ENCODE measurements at regions of chr11 and their contacts with region 1.

Region 1: GRCh38 chr11:27898166-27898565 is 197.9 kb upstream of the BDNF start:
- DNase-seq: peak; percentile 71
- ATAC-seq: peak; percentile 91
- H3K4me3 ChIP-seq: no peak overlapping the region
- H3K27ac ChIP-seq: peak overlapping the region; percentile 43
- H3K4me1 ChIP-seq: peaks cover 27% of the 10 kb centered on the region
- H3K27me3 ChIP-seq: no peaks in the 10 kb centered on the region
- CTCF ChIP-seq: no peak

Region 2: DNA sequence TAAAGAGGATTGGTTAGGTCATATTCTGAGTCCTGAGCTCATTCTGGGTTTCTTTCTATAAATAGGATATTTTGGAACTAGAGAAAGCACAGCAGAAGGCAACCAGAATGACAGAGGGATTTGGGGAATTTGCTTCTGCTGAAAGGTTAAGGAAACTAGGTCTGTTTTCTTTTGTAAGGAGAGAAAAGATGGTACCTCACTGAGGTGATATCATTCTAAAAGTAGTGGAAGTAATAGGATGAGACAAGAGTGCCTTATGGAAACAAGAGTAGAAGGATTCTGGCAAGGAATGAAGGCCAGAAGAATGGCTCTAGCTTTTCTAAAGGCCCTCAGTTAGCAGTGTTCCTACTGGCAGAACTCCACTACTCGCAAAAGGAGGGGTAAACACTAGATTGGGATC is 171.2 kb before region 1 on chr11:
- CTCF ChIA-PET with region 1: no interaction called
- POLR2A ChIA-PET with region 1: no interaction called
- intact Hi-C with region 1: no loop called
- DNase-seq: no peak
- ATAC-seq: no peak
- H3K4me3 ChIP-seq: no peak overlapping the region
- H3K27ac ChIP-seq: no peak overlapping the region
- H3K4me1 ChIP-seq: no peaks in the 10 kb centered on the region
- H3K27me3 ChIP-seq: no peaks in the 10 kb centered on the region
- CTCF ChIP-seq: no peak

Region 3: DNA sequence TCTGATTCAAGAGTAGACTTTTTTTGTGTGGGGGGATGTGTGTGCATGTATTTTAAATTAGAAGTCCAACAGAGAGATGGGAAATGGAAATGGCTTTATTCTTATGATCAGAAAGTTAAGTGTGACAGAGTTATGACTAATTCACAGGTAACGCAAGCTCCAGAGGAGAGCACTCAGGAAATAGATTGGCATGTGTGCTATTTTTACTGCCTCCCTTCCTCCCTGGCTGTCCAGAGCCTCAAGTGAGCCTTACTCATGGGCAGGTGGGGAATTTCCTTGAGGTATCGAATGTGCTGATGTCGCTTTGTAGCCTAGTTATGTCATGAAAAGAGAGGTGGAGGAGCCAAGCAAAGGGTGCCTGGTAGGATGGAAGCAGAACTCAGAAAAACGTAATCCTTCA is 127.6 kb before region 1 on chr11:
- CTCF ChIA-PET with region 1: no interaction called
- POLR2A ChIA-PET with region 1: no interaction called
- intact Hi-C with region 1: loop called (anchors 2 kb)
- DNase-seq: peak; percentile 89
- ATAC-seq: peak; percentile 97
- H3K4me3 ChIP-seq: no peak overlapping the region
- H3K27ac ChIP-seq: peak overlapping the region; percentile 29
- H3K4me1 ChIP-seq: peaks cover 20% of the 10 kb centered on the region
- H3K27me3 ChIP-seq: no peaks in the 10 kb centered on the region
- CTCF ChIP-seq: no peak

Region 4: GRCh38 chr11:27882066-27882697 is 16.0 kb before region 1 on chr11:
- CTCF ChIA-PET with region 1: no interaction called
- POLR2A ChIA-PET with region 1: interaction called, 3 read pairs
- intact Hi-C with region 1: loop called (anchors 2 kb)
- DNase-seq: peak; percentile 69
- ATAC-seq: peak; percentile 88
- H3K4me3 ChIP-seq: peak overlapping the region; percentile 24; the same call in 1 of the 2 replicates
- H3K27ac ChIP-seq: peak overlapping the region; percentile 42
- H3K4me1 ChIP-seq: peaks cover 23% of the 10 kb centered on the region
- H3K27me3 ChIP-seq: no peaks in the 10 kb centered on the region
- CTCF ChIP-seq: no peak